ENCODE measurements at regions of chr1 and their contacts with region 1.

Region 1: DNA sequence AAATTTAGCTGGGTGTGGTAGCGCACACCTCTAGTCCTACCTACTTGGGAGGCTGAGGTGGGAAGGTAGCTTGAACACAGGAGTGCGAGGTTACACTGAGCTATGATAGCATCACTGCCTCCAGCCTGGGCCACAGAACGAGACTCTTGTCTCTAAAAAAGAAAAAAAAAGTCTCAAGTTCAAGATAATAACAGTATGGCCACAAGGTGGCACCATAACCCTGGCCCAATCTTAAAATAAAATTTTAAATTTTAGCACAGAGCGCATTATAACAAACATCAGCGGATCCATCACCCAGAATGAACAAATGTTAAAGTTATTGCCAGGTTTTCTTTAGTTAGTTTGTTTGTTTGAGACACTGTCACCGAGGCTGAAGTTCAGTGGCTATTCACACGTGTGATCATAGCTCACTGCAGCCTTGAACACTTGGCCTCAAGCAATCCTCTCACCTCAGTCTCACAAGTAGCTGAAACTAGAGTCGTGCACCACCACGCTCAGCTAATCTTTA is 2.9 kb upstream of the HTR6 start:
- DNase-seq: peak in 7 of 9 experiments; percentile 24 to 74 (median 53)
- ATAC-seq: peak; percentile 19
- H3K4me3 ChIP-seq: no peak overlapping the region
- H3K4me3 Mint-ChIP-seq: no peak overlapping the region
- H3K27ac ChIP-seq: no peak overlapping the region
- H3K27ac Mint-ChIP-seq: no peak overlapping the region
- H3K4me1 ChIP-seq: peaks cover 19% of the 10 kb centered on the region
- H3K4me1 Mint-ChIP-seq: peaks cover 30% of the 10 kb centered on the region
- H3K27me3 ChIP-seq: peaks cover 8 to 11% of the 10 kb centered on the region in 2 experiments
- H3K27me3 Mint-ChIP-seq: peaks cover 22% of the 10 kb centered on the region
- CTCF ChIP-seq: peak; percentile 82

Region 2: GRCh38 chr1:19643602-19644394 is 18.0 kb before region 1 on chr1 and contains the start of gene NBL1:
- CTCF ChIA-PET with region 1: interaction called, 11 read pairs
- POLR2A ChIA-PET with region 1: interaction called, 4 read pairs
- intact Hi-C with region 1: no loop called
- DNase-seq: peak; percentile 58 to 89 (median 77)
- ATAC-seq: peak; percentile 89
- H3K4me3 ChIP-seq: peak within 1 kb of the TSS; percentile 55 to 78
- H3K4me3 Mint-ChIP-seq: peak within 1 kb of the TSS; percentile 98
- H3K27ac ChIP-seq: peak within 1 kb of the TSS in 1 of 2 experiments; percentile 45
- H3K27ac Mint-ChIP-seq: peak within 1 kb of the TSS; percentile 95
- H3K4me1 ChIP-seq: peaks cover 32% of the 10 kb centered on the region
- H3K4me1 Mint-ChIP-seq: peaks cover 33% of the 10 kb centered on the region
- H3K27me3 ChIP-seq: peaks cover 0 to 2% of the 10 kb centered on the region in 2 experiments
- H3K27me3 Mint-ChIP-seq: peaks cover 16% of the 10 kb centered on the region
- CTCF ChIP-seq: no peak
- total RNA-seq, gene NBL1: 76.5 to 80.5 TPM

Region 3: GRCh38 chr1:19682257-19682656 is 20.5 kb after region 1 on chr1:
- CTCF ChIA-PET with region 1: interaction called, 28 read pairs
- POLR2A ChIA-PET with region 1: interaction called, 6 read pairs
- intact Hi-C with region 1: no loop called
- DNase-seq: no peak
- ATAC-seq: no peak
- H3K4me3 ChIP-seq: no peak overlapping the region
- H3K4me3 Mint-ChIP-seq: no peak overlapping the region
- H3K27ac ChIP-seq: no peak overlapping the region
- H3K27ac Mint-ChIP-seq: no peak overlapping the region
- H3K4me1 ChIP-seq: peaks cover 7% of the 10 kb centered on the region
- H3K4me1 Mint-ChIP-seq: peaks cover 12% of the 10 kb centered on the region
- H3K27me3 ChIP-seq: no peaks in the 10 kb centered on the region
- H3K27me3 Mint-ChIP-seq: no peaks in the 10 kb centered on the region
- CTCF ChIP-seq: no peak

Region 4: GRCh38 chr1:19694298-19694697 is 32.5 kb after region 1 on chr1:
- CTCF ChIA-PET with region 1: interaction called, 364 read pairs
- POLR2A ChIA-PET with region 1: no interaction called
- intact Hi-C with region 1: no loop called
- DNase-seq: no peak
- ATAC-seq: no peak
- H3K4me3 ChIP-seq: no peak overlapping the region
- H3K4me3 Mint-ChIP-seq: no peak overlapping the region
- H3K27ac ChIP-seq: no peak overlapping the region
- H3K27ac Mint-ChIP-seq: no peak overlapping the region
- H3K4me1 ChIP-seq: peaks cover 8% of the 10 kb centered on the region
- H3K4me1 Mint-ChIP-seq: peaks cover 17% of the 10 kb centered on the region
- H3K27me3 ChIP-seq: no peaks in the 10 kb centered on the region
- H3K27me3 Mint-ChIP-seq: no peaks in the 10 kb centered on the region
- CTCF ChIP-seq: no peak

Region 5: GRCh38 chr1:19715334-19716203 is 53.8 kb after region 1 on chr1:
- CTCF ChIA-PET with region 1: interaction called, 13 read pairs
- POLR2A ChIA-PET with region 1: no interaction called
- intact Hi-C with region 1: no loop called
- DNase-seq: peak; percentile 54 to 88 (median 81)
- ATAC-seq: peak; percentile 100
- H3K4me3 ChIP-seq: no peak overlapping the region
- H3K4me3 Mint-ChIP-seq: no peak overlapping the region
- H3K27ac ChIP-seq: no peak overlapping the region
- H3K27ac Mint-ChIP-seq: no peak overlapping the region
- H3K4me1 ChIP-seq: no peaks in the 10 kb centered on the region
- H3K4me1 Mint-ChIP-seq: peaks cover 11% of the 10 kb centered on the region
- H3K27me3 ChIP-seq: no peaks in the 10 kb centered on the region
- H3K27me3 Mint-ChIP-seq: no peaks in the 10 kb centered on the region
- CTCF ChIP-seq: peak; percentile 77

Region 6: GRCh38 chr1:20017741-20018140 is 356.0 kb after region 1 on chr1:
- CTCF ChIA-PET with region 1: no interaction called
- POLR2A ChIA-PET with region 1: no interaction called
- intact Hi-C with region 1: no loop called
- DNase-seq: no peak
- ATAC-seq: no peak
- H3K4me3 ChIP-seq: no peak overlapping the region
- H3K4me3 Mint-ChIP-seq: no peak overlapping the region
- H3K27ac ChIP-seq: no peak overlapping the region
- H3K27ac Mint-ChIP-seq: no peak overlapping the region
- H3K4me1 ChIP-seq: no peaks in the 10 kb centered on the region
- H3K4me1 Mint-ChIP-seq: no peaks in the 10 kb centered on the region
- H3K27me3 ChIP-seq: peaks cover 0 to 2% of the 10 kb centered on the region in 2 experiments
- H3K27me3 Mint-ChIP-seq: peaks cover 5% of the 10 kb centered on the region
- CTCF ChIP-seq: no peak